ENCODE measurements at regions of chr3 and their contacts with region 1.

Region 1: GRCh38 chr3:145842302-145842902 is 318.6 kb downstream of the PLOD2 start:
- DNase-seq: no peak
- H3K4me3 ChIP-seq: no peak overlapping the region
- H3K27ac ChIP-seq: no peak overlapping the region
- H3K4me1 ChIP-seq: no peaks in the 10 kb centered on the region
- CTCF ChIP-seq: no peak

Region 2: GRCh38 chr3:145869958-145870357 is 27.6 kb after region 1 on chr3:
- CTCF ChIA-PET with region 1: no interaction called
- POLR2A ChIA-PET with region 1: interaction called, 3 read pairs
- intact Hi-C with region 1: loop called (anchors 1 kb)
- DNase-seq: no peak
- H3K4me3 ChIP-seq: no peak overlapping the region
- H3K27ac ChIP-seq: no peak overlapping the region
- H3K4me1 ChIP-seq: no peaks in the 10 kb centered on the region
- CTCF ChIP-seq: no peak

Measured in OCI-LY7 (cell line).